Activated CD4-positive, alpha-beta memory T cell treated with anti-CD3 and anti-CD28 coated beads for 36 hours (primary cell): ENCODE measurements at regions of chr7 and their contacts with region 1.

Region 1: DNA sequence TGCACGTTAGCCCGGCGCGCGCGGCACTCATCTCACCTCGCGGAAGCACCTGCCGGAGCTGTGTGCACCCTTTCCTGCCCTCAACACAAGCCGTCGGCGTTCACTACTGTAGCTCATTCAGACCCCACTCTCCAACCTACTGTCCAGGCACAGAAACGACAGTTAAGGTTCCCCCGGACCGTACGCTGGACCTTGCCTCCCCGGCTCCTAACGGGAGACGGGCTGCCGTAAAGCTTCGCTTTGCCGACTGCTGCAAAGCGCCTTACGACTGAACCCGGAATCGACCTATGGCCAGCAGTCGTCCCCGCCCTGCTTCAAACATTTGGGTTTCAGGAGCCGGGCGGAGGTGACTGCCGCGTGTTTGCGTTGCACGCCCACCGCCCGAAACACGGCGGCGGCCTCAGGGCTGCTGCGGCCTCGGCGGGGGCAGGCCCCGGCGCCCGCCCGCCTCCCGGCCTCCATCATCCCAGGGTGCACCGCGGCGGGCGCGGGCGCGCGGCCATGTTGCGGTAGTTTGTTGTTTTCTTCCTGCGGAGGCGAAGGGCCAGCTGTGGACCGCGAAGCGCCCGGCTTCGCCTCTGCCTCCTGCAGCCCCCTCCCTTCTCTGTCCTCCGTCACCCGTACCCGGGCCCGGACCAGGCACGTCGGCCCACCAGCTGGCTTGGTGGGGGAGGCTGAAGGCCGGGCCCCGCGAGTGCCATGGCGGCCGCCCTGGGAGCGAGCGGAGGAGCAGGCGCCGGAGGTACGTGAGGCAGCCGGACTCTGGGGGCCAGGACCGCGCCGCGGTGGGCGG is at the start of gene RBM33:
- DNase-seq: peak; percentile 87
- H3K4me3 Mint-ChIP-seq: peak within 1 kb of the TSS; percentile 89
- H3K27ac Mint-ChIP-seq: peak within 1 kb of the TSS; percentile 94
- H3K4me1 Mint-ChIP-seq: peaks cover 40% of the 10 kb centered on the region
- H3K27me3 Mint-ChIP-seq: no peaks in the 10 kb centered on the region
- total RNA-seq, gene RBM33: 57.7 to 65.3 TPM

Region 2: DNA sequence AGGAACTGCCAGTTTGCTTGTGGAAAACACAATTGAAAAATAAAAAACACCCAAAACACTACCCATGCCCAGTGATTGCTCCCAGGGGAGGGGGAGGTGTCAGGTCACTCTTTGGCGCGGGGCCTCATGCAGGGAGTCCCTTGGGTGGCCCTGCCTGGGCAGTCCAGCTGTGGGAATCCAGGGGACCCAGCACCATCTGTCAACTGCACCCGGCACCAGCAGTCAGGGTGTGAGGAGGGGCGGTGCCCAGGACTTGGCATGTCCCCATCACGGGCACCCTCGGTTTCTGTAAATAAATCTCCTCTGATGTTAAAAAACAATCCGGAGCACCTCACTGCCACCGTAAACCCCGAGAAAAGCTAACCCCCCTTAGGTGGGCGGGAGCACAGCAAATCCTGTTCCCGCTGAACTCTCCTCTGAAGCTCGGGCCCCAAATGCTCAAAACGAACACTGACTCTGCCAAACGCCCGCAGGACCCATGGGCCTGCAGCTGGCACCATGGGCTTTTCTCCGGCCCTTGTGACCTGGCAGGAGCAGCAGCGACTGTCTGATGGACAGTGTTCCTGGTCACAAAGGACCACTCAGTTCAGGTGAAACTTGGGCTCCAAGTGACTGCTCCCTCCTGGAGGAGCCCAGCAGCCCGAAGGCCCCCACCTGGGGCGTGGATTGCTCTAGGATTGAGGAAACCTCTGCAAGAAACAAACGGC is 204.9 kb before region 1 on chr7:
- CTCF ChIA-PET with region 1: no interaction called
- POLR2A ChIA-PET with region 1: no interaction called
- intact Hi-C with region 1: no loop called
- DNase-seq: no peak
- H3K4me3 Mint-ChIP-seq: no peak overlapping the region
- H3K27ac Mint-ChIP-seq: no peak overlapping the region
- H3K4me1 Mint-ChIP-seq: no peaks in the 10 kb centered on the region
- H3K27me3 Mint-ChIP-seq: peaks cover 40% of the 10 kb centered on the region

Region 3: DNA sequence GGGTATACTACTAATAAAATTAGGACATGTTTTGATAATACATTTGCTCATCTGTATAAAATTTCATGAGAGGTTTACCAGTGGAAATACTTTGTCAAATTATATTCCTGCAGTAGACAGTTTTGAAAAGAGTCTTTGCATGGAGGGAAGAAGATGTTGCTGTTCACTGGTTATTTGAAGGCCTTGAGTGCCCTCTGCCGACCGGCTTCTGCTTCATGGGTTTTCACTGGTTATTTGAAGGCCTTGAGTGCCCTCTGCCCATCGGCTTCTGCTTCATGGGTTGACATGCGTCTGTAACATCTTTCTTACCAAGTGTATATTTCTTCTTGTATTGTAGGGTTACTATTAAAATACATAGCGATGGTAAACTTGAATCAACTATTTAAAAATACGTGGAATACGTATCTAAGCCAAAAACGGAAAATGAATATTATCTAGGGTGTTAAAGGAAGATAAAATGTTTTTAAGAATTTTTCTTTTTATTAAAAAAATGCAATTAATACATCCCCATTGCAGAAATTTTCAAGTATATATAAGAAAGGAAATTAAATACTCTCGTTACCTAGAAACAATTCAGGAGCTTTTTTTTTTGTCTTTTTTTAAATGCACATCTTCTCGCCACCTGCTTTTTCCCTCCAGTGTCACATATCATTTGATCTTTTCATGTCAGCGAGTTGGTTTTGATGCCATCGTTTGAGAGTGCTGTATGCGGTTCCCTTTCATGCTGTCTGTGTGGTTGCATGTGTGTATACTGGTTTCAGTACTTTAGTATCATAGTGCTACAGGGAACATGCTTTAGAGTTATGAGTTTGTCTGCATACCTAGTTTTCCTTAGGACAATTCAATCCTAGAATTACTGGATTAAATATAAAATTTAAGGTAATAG is 94.5 kb after region 1 on chr7:
- CTCF ChIA-PET with region 1: interaction called, 5 read pairs
- POLR2A ChIA-PET with region 1: no interaction called
- intact Hi-C with region 1: loop called (anchors 2 kb)
- DNase-seq: peak; percentile 83
- H3K4me3 Mint-ChIP-seq: no peak overlapping the region
- H3K27ac Mint-ChIP-seq: peak overlapping the region; percentile 39
- H3K4me1 Mint-ChIP-seq: peaks cover 51% of the 10 kb centered on the region
- H3K27me3 Mint-ChIP-seq: no peaks in the 10 kb centered on the region

Region 4: GRCh38 chr7:155763691-155764437 is 119.5 kb after region 1 on chr7:
- CTCF ChIA-PET with region 1: interaction called, 10 read pairs
- POLR2A ChIA-PET with region 1: interaction called, 3 read pairs
- intact Hi-C with region 1: loop called (anchors 1 kb)
- DNase-seq: peak; percentile 80
- H3K4me3 Mint-ChIP-seq: peak overlapping the region; percentile 76
- H3K27ac Mint-ChIP-seq: peak overlapping the region; percentile 99
- H3K4me1 Mint-ChIP-seq: peaks cover 52% of the 10 kb centered on the region
- H3K27me3 Mint-ChIP-seq: no peaks in the 10 kb centered on the region

Region 5: GRCh38 chr7:155769701-155770100 is 125.3 kb after region 1 on chr7:
- CTCF ChIA-PET with region 1: interaction called, 10 read pairs
- POLR2A ChIA-PET with region 1: interaction called, 3 read pairs
- intact Hi-C with region 1: loop called (anchors 1 kb)
- DNase-seq: no peak
- H3K4me3 Mint-ChIP-seq: no peak overlapping the region
- H3K27ac Mint-ChIP-seq: peak overlapping the region; percentile 18
- H3K4me1 Mint-ChIP-seq: peaks cover 7% of the 10 kb centered on the region
- H3K27me3 Mint-ChIP-seq: no peaks in the 10 kb centered on the region

Region 6: GRCh38 chr7:157138424-157139110 is 1494.2 kb after region 1 on chr7 and contains the start of gene UBE3C:
- CTCF ChIA-PET with region 1: no interaction called
- POLR2A ChIA-PET with region 1: no interaction called
- intact Hi-C with region 1: loop called (anchors 10 kb)
- DNase-seq: peak; percentile 91
- H3K4me3 Mint-ChIP-seq: peak within 1 kb of the TSS; percentile 79
- H3K27ac Mint-ChIP-seq: peak within 1 kb of the TSS; percentile 91
- H3K4me1 Mint-ChIP-seq: peaks cover 37% of the 10 kb centered on the region
- H3K27me3 Mint-ChIP-seq: no peaks in the 10 kb centered on the region
- total RNA-seq, gene UBE3C: 59.8 to 59.9 TPM